ENCODE measurements at regions of chr16 and their contacts with region 1.

Region 1: GRCh38 chr16:50210266-50211038 is 55.9 kb upstream of the ADCY7 start:
- DNase-seq: peak; percentile 70 to 90 (median 82)
- ATAC-seq: peak; percentile 94
- H3K4me3 ChIP-seq: no peak overlapping the region
- H3K27ac ChIP-seq: peak overlapping the region; percentile 20 to 50
- H3K4me1 ChIP-seq: peaks cover 21 to 44% of the 10 kb centered on the region in 2 donors
- H3K27me3 ChIP-seq: no peaks in the 10 kb centered on the region
- CTCF ChIP-seq: peak; percentile 53 to 65

Region 2: DNA sequence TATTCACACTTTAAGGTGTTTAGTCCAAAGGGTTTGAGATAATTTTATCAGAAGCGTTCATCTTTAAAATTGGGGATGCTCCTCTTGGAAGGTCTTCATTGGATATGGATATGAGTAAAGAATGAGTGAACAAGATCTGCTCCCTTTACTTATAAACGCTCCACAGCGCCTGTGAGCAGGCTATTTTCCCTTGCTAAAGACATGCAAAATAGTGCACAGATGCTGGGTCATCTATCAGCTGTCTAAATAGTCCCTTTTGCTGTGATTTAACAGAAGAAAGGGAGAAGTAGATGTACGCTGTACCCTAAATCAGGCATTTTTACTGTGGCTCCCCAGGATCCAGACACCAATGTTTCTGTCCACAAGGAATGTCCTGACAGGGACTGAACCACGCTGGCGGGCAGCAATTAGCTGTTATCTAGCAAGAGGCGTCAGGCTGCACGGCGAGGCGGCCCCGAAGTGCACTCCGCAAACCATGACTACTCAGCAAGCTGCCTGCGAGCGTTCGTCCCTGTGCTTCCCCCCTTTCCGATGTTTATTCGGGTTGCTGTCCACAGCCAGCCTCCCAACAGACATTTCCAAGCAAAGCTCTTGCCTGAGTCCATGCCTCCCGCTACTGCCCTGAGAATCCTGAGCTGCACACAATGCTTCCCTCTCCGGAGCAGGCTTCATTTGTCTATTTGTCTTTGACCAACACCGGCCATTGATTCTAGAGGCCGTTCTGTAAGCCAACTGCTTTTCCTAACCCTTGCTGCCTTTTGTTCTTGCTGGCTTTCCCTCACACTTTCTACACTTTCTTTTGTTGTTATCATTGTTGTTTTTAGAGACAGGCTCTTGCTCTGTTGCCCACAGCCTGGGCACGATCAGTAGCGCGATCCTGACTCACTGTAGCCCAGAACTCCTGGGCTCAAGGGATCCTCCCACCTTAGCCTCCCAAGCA is 241.1 kb before region 1 on chr16:
- intact Hi-C with region 1: no loop called
- DNase-seq: peak in 1 of 4 donors; percentile 65
- ATAC-seq: peak; percentile 43
- H3K4me3 ChIP-seq: no peak overlapping the region
- H3K27ac ChIP-seq: no peak overlapping the region
- H3K4me1 ChIP-seq: no peaks in the 10 kb centered on the region
- H3K27me3 ChIP-seq: peaks cover 8 to 27% of the 10 kb centered on the region in 2 donors
- CTCF ChIP-seq: no peak

Region 3: DNA sequence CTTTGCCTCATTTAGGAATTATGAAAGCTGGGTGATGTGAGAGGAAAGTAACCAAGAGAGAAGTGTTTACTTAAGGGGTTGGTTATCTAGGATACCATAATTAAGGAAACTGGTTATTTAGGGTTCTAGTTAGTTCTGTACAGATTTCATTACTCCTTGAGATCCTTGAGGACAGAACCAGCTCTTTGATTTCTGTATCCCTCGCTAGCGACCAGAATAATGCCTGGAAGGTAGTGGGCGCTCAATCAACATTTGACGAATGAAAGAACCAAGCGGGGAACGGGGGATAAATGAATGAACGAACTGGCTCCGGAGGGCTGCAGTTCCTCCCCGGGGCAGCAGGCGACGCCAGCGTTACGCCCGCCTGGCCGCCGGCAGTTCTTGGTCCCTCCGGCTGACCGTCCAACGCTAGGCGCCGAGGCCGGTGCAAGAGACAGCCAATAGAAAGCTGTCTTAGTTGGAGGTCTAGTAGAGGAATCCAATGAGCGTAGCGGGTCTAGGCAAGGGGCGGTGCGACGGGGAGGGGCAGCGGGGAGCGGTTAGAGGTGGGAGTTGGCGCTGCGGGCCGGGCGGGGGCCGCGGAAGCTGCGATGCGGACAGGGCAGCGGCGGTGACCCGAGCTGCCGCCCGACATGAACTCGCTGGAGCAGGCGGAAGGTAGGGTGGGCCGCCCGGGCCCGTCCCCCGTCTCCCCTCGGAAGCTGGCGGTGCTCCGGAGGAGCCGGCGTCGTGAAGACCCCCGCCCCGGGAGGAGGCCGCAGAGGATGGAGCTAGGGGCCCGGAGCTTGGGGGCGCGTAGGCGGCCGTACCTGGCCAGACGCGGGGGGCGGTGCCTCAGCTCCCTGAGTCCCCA is 185.5 kb before region 1 on chr16 and contains the start of gene CNEP1R1:
- intact Hi-C with region 1: loop called in 1 of 2 experiments (anchors 10 kb)
- DNase-seq: peak; percentile 94 to 99 (median 96)
- ATAC-seq: peak; percentile 99
- H3K4me3 ChIP-seq: peak within 1 kb of the TSS; percentile 98 to 99
- H3K27ac ChIP-seq: peak within 1 kb of the TSS; percentile 86 to 91
- H3K4me1 ChIP-seq: peaks cover 12 to 42% of the 10 kb centered on the region in 2 donors
- H3K27me3 ChIP-seq: no peaks in the 10 kb centered on the region
- CTCF ChIP-seq: peak; percentile 97 to 100
- polyA plus RNA-seq, gene CNEP1R1: 32.1 to 44.3 (median 37.9) TPM

Region 4: GRCh38 chr16:50152807-50153452 is 57.5 kb before region 1 on chr16 and contains the start of gene TENT4B:
- intact Hi-C with region 1: loop called in 1 of 2 experiments (anchors 5 kb)
- DNase-seq: peak; percentile 90 to 97 (median 93)
- ATAC-seq: peak; percentile 92
- H3K4me3 ChIP-seq: peak within 1 kb of the TSS; percentile 80 to 90
- H3K27ac ChIP-seq: peak within 1 kb of the TSS; percentile 94 to 97
- H3K4me1 ChIP-seq: peaks cover 18 to 40% of the 10 kb centered on the region in 2 donors
- H3K27me3 ChIP-seq: no peaks in the 10 kb centered on the region
- CTCF ChIP-seq: no peak
- polyA plus RNA-seq, gene TENT4B: 15.4 to 19.0 (median 16.5) TPM